MCF 10A (cell line): ENCODE measurements at regions of chr12 and their contacts with region 1.

Region 1: GRCh38 chr12:6423267-6424007 is 21.3 kb upstream of the CD27 start:
- DNase-seq: peak; percentile 96
- H3K4me3 Mint-ChIP-seq: no peak overlapping the region
- H3K27ac Mint-ChIP-seq: no peak overlapping the region
- H3K4me1 Mint-ChIP-seq: peaks cover 5% of the 10 kb centered on the region
- H3K27me3 Mint-ChIP-seq: no peaks in the 10 kb centered on the region
- CTCF ChIP-seq: peak; percentile 88

Region 2: GRCh38 chr12:6493497-6494257 is 70.2 kb after region 1 on chr12 and contains the start of gene NCAPD2:
- CTCF ChIA-PET with region 1: interaction called, 4 read pairs
- POLR2A ChIA-PET with region 1: no interaction called
- intact Hi-C with region 1: loop called (anchors 2 kb)
- DNase-seq: peak; percentile 96
- H3K4me3 Mint-ChIP-seq: peak within 1 kb of the TSS; percentile 95
- H3K27ac Mint-ChIP-seq: peak within 1 kb of the TSS; percentile 98
- H3K4me1 Mint-ChIP-seq: peaks cover 21% of the 10 kb centered on the region
- H3K27me3 Mint-ChIP-seq: no peaks in the 10 kb centered on the region
- CTCF ChIP-seq: no peak
- total RNA-seq, gene NCAPD2: 31.9 and 52.0 TPM in 2 replicates

Region 3: DNA sequence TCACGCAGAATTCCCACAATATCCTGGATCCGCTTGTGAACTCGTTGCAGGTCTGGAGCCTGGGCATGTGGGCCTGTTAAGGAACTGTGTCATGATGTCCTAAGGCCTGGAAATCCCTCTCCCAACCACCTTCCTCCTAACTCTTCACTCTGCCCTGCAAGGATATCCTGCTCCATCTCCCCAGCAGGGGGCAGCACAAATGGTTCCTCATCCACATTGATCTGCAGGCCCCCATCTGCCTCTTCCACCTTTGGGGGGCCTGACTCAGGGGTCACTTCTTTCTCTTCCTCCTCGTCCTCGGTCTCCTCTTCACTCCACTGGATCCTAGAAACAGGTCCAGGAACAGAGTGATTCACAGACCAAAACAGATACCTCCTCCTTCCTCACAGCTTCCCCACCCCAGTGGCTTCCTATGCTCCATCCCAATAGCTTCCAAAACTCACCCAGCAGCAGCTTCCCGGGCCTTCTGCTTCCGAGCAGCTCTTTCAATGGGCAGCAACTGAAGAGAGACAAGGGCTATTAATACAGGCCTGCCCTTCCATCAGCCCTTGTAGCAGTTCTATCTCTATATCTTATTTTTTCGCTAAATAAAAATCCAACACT is 140.1 kb after region 1 on chr12:
- CTCF ChIA-PET with region 1: interaction called, 40 read pairs
- POLR2A ChIA-PET with region 1: interaction called, 4 read pairs
- intact Hi-C with region 1: loop called (anchors 2 kb)
- DNase-seq: peak; percentile 61
- H3K4me3 Mint-ChIP-seq: no peak overlapping the region
- H3K27ac Mint-ChIP-seq: no peak overlapping the region
- H3K4me1 Mint-ChIP-seq: peaks cover 7% of the 10 kb centered on the region
- H3K27me3 Mint-ChIP-seq: no peaks in the 10 kb centered on the region
- CTCF ChIP-seq: peak; percentile 64

Region 4: DNA sequence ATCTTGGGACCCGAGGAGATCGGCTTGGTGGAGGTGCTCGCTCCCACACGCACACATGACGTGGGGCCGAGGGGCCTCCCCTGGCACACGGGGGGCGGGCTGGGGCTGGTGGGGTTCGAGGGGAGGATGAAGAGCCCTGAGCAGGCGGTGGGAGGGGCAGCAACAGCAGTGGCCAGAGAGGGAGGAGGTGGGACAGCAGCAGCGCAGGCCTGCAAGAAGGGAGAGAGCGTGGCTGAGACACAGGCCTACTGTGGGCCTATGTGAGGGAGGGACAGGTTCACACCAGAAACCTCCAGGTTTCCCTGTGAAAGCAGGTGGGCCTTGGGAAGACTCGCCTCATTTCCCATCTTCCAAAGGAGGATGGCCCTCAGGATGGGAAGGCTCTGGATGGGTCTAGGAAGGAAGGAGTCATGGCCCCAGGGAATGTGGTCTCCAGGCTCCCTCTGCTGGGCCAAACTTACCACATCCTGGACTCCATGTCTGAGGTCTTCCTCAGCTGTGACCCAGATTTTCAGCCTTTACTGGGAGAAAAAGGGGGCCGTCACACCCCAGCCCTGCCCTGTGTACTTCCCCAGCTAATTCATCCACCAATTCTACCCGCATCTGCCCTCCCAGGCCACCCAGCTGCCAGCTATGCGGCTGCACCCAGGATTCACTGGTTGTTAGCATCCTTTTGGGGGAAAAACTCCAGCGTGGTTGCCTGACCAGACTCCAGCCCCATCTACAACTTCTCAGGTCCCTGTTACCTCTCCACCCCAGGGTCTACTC is 274.3 kb after region 1 on chr12:
- CTCF ChIA-PET with region 1: no interaction called
- POLR2A ChIA-PET with region 1: no interaction called
- intact Hi-C with region 1: loop called (anchors 2 kb)
- DNase-seq: peak; percentile 73
- H3K4me3 Mint-ChIP-seq: no peak overlapping the region
- H3K27ac Mint-ChIP-seq: no peak overlapping the region
- H3K4me1 Mint-ChIP-seq: peaks cover 8% of the 10 kb centered on the region
- H3K27me3 Mint-ChIP-seq: peaks cover 60% of the 10 kb centered on the region
- CTCF ChIP-seq: peak; percentile 66